ENCODE measurements at regions of chr20 and their contacts with region 1.

Region 1: DNA sequence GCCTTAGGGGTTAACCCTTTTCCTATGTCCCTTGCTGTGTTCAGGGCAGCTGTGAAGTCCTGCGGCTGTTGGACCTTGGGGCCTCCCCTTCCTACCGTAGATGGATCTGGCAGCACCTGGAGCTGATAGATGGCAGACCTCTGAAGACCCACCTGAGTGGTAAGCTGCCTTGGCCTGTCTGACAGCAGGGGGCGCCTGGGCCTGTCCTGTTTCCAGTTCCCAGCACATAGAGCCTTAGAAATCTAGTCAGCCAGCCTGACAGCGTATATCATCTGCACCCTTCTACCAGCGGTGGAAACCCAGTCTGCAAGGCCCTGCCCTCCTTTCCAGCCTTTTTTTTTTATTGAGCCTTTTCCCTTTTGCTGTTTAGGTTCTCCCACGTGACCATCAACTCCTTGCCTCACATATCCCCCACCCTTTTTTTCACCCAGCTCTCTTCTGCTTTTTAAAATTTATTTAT is 26.6 kb downstream of the CNBD2 start:
- DNase-seq: peak; percentile 76
- CTCF ChIP-seq: peak; percentile 85

Region 2: DNA sequence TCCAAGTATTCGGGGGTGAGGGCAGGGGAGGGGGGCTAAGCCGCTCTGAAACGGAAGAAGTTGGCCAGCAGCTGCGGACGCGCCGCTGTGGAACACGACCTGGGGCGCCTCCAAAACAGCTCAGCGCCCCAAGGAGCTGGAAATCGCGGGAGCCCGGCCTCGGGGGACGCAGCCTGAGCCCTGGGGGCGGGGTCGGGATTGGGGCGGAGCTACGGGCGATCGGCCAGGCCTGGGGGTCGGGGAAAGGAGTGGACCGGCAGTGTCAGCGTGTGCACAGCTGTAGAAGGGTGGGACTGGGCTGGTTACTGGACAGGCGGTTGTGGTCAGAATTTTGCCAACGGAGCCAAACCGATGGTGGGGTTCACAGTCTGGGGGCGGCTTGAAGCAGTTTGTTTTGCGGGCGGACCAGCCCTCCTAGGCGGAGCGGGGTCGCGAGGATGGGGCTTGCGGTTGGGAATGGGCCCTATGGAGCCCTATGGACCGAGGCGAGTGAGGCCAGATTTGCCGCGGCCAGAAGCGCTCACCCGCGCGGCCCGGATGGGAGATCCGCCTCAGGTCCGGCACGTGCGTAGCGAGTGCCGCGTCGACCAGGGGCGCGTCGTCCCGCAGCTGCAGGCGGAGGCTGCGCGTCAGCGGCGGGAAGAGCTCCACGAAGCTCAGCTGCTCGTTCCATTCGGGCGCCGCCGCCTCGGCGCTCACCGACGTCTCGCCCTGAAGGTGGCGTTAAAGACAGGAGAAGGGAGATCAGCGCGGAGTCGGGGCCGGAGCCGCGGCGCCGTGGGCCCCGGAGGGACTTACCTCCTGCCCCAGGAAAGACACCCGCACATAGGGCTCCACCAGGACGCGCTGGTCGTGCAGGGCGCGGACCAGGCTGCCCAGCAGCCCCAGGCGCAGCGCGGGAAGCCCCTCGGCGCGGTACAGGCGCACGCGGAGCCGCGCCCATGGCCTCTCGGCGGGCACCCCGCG is 393.7 kb before region 1 on chr20:
- in situ Hi-C with region 1: no loop called
- DNase-seq: peak; percentile 88
- CTCF ChIP-seq: peak; percentile 81

Region 3: DNA sequence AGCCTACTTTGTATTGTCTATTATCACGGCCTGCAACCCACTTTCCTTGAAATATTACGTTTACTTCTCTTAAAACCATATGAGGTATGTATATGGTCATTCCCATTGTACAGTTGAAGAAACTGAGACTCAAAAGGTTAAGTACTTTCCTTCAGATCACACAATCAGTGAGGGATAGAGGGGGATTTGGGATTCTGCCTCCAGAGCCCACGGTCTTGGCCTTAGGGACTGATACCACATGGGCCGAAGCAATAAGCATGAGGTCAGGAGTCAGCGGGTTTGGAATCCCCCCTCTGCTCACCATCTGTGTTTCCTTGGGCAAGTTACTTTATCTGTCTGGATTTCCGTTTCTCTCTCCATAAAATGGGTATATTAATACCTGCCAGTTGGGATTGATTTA is 140.1 kb after region 1 on chr20:
- in situ Hi-C with region 1: loop called (anchors 5 kb)
- DNase-seq: no peak
- CTCF ChIP-seq: no peak

Region 4: GRCh38 chr20:36439040-36439730 is 444.2 kb after region 1 on chr20:
- in situ Hi-C with region 1: loop called (anchors 25 kb)
- DNase-seq: peak; percentile 85
- CTCF ChIP-seq: peak; percentile 97

Measured in GM13976 (cell line).